PC-3 (cell line): ENCODE measurements at regions of chr10 and their contacts with region 1.

Region 1: GRCh38 chr10:84264611-84265141 is 19.8 kb downstream of the RGR start:
- DNase-seq: peak; percentile 67
- ATAC-seq: peak; percentile 91
- H3K4me3 ChIP-seq: no peak overlapping the region
- H3K27ac ChIP-seq: no peak overlapping the region
- H3K4me1 ChIP-seq: peaks cover 10% of the 10 kb centered on the region; the same call in 1 of the 2 replicates
- H3K27me3 ChIP-seq: 0 out of 2 replicates have a peak, but pooled peaks cover 6% of the 10 kb centered on the region
- CTCF ChIP-seq: peak; percentile 89

Region 2: DNA sequence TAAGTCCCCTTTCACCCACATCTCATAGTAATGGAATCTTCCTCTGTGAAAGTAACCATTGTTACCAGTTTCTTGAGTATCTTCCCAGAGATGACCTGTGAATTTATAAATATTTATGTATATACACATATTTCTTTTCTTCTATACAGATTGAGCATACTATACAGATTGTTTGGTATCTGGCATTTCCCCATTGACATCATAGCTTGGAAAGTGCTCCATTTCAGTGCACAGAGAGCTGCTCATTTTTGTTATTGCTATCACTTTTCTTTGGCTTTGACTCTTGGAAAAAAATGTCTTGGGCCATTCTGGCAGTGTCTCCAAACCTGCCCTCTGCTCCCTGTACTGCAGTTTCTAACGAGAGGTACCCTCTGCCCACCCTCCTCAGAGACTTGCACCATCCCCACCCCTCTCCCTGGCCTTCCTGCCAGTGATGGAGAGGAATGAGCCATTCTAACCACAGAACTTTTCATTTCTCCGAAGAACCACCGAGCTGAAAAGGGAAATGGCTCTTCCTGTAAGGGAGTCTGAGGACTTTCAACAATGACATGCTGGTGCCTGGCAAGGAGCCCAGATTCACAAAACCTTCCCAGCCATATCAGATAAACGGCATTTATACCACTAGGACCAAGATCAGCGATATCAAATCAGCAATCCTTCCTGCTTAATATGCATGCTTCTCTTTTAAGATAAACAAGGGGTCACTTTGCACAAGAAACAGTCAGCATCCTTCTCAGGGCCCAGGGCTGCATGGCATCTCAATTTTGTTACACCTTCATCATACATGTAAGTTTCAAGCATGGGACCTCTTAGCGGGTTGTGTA is 44.0 kb after region 1 on chr10:
- CTCF ChIA-PET with region 1: no interaction called
- POLR2A ChIA-PET with region 1: no interaction called
- intact Hi-C with region 1: loop called (anchors 5 kb)
- DNase-seq: peak; percentile 48
- ATAC-seq: peak; percentile 64
- H3K4me3 ChIP-seq: no peak overlapping the region
- H3K27ac ChIP-seq: peak overlapping the region; percentile 36; the same call in 1 of the 2 replicates
- H3K4me1 ChIP-seq: peaks cover 23% of the 10 kb centered on the region
- H3K27me3 ChIP-seq: no peaks in the 10 kb centered on the region
- CTCF ChIP-seq: no peak

Region 3: GRCh38 chr10:84328418-84329195 is 63.9 kb after region 1 on chr10 and contains the start of gene CCSER2:
- CTCF ChIA-PET with region 1: no interaction called
- POLR2A ChIA-PET with region 1: no interaction called
- intact Hi-C with region 1: loop called (anchors 5 kb)
- DNase-seq: peak; percentile 13
- ATAC-seq: peak; percentile 87
- H3K4me3 ChIP-seq: peak within 1 kb of the TSS; percentile 96
- H3K27ac ChIP-seq: 0 out of 2 replicates have a peak within 1 kb of the TSS, but pooled peaks have one; percentile 13
- H3K4me1 ChIP-seq: peaks cover 13% of the 10 kb centered on the region; the same call in 1 of the 2 replicates
- H3K27me3 ChIP-seq: no peaks in the 10 kb centered on the region
- CTCF ChIP-seq: no peak
- total RNA-seq, gene CCSER2: 10.2 and 14.1 TPM in 2 replicates

Region 4: GRCh38 chr10:84375011-84375410 is 110.3 kb after region 1 on chr10:
- CTCF ChIA-PET with region 1: no interaction called
- POLR2A ChIA-PET with region 1: no interaction called
- intact Hi-C with region 1: loop called (anchors 1 kb)
- DNase-seq: peak; percentile 75
- ATAC-seq: no peak
- H3K4me3 ChIP-seq: no peak overlapping the region
- H3K27ac ChIP-seq: no peak overlapping the region
- H3K4me1 ChIP-seq: peaks cover 10% of the 10 kb centered on the region
- H3K27me3 ChIP-seq: no peaks in the 10 kb centered on the region
- CTCF ChIP-seq: peak; percentile 74